Right ventricle myocardium superior (tissue), 1 donor: ENCODE measurements at regions of chr22 and their contacts with region 1.

Region 1: DNA sequence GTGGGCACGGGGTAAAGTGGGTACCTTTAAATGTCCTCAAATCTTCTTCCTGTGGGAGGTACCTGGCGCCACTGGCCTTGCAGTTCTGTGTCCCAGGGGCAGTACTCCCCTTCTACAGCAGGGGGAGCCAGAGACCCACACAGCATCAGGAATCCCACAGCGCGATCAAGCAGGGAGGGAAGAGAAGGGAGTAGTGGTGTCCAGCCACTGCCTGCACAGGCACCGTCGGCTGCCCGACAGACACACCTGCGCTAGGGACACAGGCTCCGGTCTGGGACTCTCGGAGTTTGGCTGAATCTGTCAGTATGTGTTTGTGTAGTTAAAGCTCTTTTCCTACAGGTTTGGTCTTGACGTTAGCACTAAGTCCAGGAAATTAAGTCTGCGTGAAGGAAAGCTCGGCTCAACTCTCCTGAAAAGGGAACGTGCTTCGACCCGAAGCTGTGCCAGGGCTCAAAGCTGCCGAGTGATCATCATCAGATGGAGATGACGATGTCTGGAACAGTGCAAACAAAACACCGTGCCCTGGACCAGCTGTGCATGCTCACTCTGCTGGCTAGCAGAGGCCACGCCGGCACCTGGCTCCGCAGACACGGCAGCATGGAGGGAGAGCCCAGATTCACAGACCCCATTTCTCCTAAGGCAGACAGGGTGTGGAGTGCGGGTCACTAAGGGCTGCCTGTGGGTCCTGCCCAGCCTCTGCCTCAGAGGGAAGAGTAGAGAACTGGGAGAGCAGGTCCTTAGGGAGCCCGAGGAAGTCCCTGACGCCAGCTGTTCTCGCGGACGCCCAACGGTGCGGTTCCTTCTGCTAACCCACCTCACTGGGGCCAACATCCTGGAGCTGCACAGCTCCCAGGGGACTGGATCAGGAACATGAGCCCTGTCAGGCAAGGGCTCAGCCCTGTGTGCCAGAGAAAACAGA is 56.0 kb upstream of the BID start:
- DNase-seq: peak; percentile 87
- ATAC-seq: peak; percentile 84

Region 2: DNA sequence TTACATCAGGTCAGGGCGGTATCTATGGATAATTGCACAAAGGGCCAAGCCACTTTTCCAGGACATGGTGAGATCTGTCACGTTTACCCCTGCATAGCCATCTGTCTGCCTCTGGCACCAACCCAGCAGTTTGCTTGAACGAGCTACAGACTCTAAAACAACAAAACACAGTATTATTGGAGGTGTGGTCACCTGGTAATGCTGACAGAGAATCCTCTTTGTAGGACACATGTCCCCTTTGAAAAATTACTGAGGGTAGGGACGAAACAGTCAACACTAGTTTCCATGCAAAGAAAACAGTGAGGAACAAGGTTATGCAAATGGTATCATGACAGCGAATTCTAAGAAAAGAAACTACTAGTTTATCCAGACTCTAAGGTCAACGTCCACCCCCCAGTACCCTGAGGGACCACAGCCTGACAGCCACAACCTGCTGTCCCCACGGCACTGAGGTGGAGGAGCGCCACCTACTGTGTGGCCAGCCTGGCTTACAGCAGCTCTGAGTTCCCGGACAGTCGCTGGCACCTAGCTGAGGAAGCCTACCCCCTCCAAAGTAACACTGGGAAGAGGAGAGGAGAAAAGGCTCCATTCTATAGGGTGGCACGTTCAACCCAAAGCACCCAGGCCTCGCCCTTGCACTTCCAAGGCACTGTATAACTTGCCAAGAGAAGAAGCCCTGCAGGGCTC is 61.3 kb after region 1 on chr22:
- intact Hi-C with region 1: loop called (anchors 2 kb)
- DNase-seq: peak; percentile 74
- ATAC-seq: peak; percentile 76

Region 3: GRCh38 chr22:17903564-17904295 is 73.4 kb after region 1 on chr22:
- intact Hi-C with region 1: loop called (anchors 5 kb)
- DNase-seq: no peak
- ATAC-seq: peak; percentile 74

Region 4: GRCh38 chr22:18012531-18012930 is 182.2 kb after region 1 on chr22:
- intact Hi-C with region 1: no loop called
- DNase-seq: no peak
- ATAC-seq: no peak